ENCODE measurements at regions of chr9 and their contacts with region 1.

Region 1: DNA sequence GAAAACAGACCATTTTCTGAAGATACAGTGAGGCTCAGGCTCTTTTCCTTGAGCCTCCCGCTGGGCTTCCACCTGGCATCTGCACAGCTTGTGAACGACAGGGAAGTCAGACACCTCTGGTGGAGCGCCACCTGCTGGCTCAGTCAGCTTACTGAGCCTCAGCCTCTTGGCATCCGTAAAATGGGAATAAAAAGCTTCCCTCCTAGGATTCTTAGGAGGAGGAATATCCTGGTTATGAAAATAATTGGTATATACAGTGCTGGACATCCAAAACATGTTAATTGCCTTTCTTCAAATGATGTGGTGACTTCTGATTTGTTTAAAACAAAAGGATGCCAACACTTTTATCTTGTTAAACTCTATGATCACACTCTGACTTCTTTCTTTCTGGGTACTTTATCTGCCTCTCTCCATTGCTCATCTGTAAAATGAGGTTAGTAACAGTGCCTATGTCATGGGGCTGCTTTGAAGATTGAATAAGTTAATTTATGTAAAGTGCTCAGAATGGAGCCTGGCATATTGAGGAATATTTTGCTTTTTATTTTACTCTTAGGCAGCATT is 67.5 kb downstream of the MAMDC2 start:
- DNase-seq: peak; percentile 80

Region 2: DNA sequence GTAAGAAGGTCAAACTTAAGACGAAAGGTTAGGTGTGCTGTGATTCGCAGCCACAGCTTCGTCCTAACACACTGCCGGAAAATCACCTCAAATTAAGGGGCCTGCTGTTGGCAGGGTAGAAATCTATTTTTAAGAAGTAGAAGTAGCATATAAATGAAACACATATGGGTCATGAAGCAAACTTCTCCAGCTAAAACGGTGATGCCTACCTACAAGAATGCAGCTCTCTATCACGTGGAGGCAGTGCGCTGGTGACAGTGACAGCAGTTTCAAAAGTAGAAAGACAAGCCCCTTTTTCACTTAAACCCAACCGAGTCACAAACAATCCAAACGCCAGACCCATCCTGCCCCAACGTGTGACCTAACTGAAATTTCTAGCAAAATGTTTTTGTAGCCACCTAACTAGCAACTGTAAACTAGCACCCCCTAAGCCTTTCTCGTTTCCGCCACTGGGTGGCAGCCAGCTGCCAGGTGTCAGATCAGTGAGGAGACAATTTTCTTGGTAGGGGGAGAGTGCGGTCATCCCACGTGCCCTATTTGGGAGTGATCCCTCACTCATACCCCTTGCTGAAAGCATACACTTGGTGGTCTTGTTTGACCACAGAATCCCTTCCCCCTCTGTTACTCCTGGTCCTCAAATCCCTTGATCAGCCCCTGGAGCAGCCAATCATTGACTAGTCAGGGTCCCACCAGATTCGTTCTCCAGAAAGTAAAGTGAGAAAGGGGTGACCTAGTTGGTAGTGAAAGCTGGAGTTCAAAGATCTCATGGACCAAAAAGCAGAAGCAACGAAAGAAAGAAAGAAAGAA is 139.3 kb before region 1 on chr9:
- in situ Hi-C with region 1: loop called (anchors 25 kb)
- DNase-seq: peak; percentile 79